MCF 10A (cell line): ENCODE measurements at regions of chr6 and their contacts with region 1.

Region 1: DNA sequence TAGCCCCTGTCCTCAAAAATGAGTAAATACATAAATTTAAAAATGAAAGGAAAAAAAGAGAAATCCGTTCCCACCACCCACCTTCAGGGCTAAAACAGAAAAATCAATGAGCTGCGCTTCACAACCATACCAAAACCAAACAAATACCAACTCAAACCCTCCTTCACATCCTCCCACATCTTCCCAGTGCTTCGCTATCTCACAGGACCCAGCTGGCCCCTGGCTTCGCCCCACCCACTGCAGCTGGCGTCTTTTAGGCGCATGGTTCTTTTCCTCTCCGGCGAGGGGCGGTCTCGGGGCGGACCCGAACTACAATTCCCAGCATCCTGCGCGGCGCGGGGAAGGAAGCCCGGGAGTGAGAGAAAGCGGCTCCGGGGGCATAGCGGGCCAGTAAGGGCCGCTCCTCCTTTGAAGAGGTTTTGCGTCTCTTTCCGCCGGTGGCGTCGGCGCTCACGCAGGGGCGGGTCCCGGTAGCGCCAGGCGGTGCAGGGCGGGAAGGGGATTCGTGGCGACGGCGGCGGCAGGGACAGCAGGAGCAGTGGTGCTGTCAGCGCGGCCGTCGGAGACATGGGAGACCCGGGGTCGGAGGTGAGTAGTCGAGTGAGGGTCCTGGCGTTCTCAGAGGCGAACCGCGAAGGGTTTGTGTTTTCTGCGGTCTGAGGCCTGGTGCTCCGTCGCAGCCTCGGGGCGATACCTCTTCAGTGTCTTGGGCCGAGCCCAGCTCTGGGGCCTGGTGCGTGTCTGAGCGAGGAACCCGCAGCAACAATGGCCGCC is at the start of gene ZNF451:
- DNase-seq: peak; percentile 97
- H3K4me3 Mint-ChIP-seq: peak within 1 kb of the TSS; percentile 70
- H3K27ac Mint-ChIP-seq: peak within 1 kb of the TSS; percentile 71
- H3K4me1 Mint-ChIP-seq: peaks cover 28% of the 10 kb centered on the region
- H3K27me3 Mint-ChIP-seq: no peaks in the 10 kb centered on the region
- CTCF ChIP-seq: no peak
- total RNA-seq, gene ZNF451: 63.0 and 65.7 TPM in 2 replicates

Region 2: GRCh38 chr6:57048577-57048976 is 41.3 kb before region 1 on chr6:
- CTCF ChIA-PET with region 1: interaction called, 3 read pairs
- POLR2A ChIA-PET with region 1: interaction called, 14 read pairs
- intact Hi-C with region 1: no loop called
- DNase-seq: peak; percentile 5
- H3K4me3 Mint-ChIP-seq: peak overlapping the region; percentile 63
- H3K27ac Mint-ChIP-seq: peak overlapping the region; percentile 13
- H3K4me1 Mint-ChIP-seq: peaks cover 20% of the 10 kb centered on the region
- H3K27me3 Mint-ChIP-seq: peaks cover 5% of the 10 kb centered on the region
- CTCF ChIP-seq: no peak

Region 3: DNA sequence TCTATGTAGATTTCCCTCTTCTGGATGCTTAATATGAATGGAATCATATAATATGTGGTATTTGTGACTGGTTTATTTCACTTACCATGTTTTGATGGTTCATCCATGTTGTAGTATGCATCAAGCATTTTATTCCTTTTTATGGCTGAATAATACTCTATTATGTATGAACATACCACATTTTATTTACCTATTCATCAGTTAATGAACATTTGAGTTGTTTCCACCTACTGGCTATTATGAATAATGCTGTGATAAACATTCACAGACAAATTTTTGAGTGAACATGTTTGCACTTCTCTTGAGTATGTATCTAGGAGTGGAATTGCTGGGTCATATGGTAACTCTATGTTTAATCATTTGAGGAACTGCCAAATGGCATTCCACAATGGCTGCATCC is 14.8 kb before region 1 on chr6:
- CTCF ChIA-PET with region 1: no interaction called
- POLR2A ChIA-PET with region 1: interaction called, 13 read pairs
- intact Hi-C with region 1: no loop called
- DNase-seq: no peak
- H3K4me3 Mint-ChIP-seq: no peak overlapping the region
- H3K27ac Mint-ChIP-seq: no peak overlapping the region
- H3K4me1 Mint-ChIP-seq: no peaks in the 10 kb centered on the region
- H3K27me3 Mint-ChIP-seq: no peaks in the 10 kb centered on the region
- CTCF ChIP-seq: peak; percentile 12